PC-9 (cell line): ENCODE measurements at regions of chr1 and their contacts with region 1.

Region 1: DNA sequence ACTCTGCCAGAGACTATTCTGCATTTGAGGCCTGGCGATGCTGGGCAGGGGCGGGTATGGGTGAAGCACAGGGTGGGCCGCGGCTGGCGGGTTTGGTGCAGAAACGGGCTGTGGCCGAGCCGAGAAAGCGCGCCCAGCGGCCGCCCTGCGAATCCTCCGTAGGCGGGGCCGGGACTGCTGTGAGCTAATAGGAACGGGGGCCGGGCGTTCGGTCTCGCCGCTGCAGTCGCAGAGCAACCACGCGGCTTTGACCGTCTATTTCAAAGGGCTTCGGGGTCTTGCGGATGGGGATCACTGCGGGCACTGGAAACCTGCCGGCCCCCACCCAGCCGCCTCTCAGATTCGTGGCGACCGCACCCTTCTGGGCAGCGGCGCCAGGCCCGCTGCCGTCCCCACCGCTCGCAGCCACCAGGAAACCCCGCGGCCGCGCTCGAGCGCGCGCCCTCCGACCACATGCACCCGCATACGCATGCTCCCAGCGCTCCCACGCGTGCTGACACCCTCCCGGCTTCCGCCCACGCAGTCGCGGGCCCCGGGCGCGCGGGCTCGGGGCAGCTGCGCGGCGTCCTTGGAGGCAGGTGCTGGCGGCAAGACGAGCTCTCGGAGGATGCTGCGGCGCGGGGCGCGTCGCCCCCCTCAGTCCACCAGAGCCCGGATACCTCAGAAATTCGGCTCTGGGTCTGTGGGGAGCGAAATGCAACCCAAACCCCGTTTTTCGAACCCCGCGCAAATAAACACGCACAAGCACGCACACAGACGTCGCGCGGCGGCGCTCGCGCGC is 32.6 kb downstream of the DNTTIP2 start:
- DNase-seq: peak; percentile 77 to 81
- H3K4me3 ChIP-seq: peak overlapping the region; percentile 94
- H3K27ac ChIP-seq: peak overlapping the region; percentile 81
- H3K4me1 ChIP-seq: peaks cover 36% of the 10 kb centered on the region
- H3K27me3 ChIP-seq: no peaks in the 10 kb centered on the region
- CTCF ChIP-seq: peak; percentile 37; the same call in 1 of the 2 replicates

Region 2: GRCh38 chr1:93437976-93438605 is 408.3 kb before region 1 on chr1:
- CTCF ChIA-PET with region 1: no interaction called
- POLR2A ChIA-PET with region 1: no interaction called
- intact Hi-C with region 1: loop called (anchors 2 kb)
- DNase-seq: peak in 1 of 2 experiments; percentile 70
- H3K4me3 ChIP-seq: no peak overlapping the region
- H3K27ac ChIP-seq: no peak overlapping the region
- H3K4me1 ChIP-seq: peaks cover 14% of the 10 kb centered on the region
- H3K27me3 ChIP-seq: no peaks in the 10 kb centered on the region
- CTCF ChIP-seq: peak; percentile 96

Region 3: DNA sequence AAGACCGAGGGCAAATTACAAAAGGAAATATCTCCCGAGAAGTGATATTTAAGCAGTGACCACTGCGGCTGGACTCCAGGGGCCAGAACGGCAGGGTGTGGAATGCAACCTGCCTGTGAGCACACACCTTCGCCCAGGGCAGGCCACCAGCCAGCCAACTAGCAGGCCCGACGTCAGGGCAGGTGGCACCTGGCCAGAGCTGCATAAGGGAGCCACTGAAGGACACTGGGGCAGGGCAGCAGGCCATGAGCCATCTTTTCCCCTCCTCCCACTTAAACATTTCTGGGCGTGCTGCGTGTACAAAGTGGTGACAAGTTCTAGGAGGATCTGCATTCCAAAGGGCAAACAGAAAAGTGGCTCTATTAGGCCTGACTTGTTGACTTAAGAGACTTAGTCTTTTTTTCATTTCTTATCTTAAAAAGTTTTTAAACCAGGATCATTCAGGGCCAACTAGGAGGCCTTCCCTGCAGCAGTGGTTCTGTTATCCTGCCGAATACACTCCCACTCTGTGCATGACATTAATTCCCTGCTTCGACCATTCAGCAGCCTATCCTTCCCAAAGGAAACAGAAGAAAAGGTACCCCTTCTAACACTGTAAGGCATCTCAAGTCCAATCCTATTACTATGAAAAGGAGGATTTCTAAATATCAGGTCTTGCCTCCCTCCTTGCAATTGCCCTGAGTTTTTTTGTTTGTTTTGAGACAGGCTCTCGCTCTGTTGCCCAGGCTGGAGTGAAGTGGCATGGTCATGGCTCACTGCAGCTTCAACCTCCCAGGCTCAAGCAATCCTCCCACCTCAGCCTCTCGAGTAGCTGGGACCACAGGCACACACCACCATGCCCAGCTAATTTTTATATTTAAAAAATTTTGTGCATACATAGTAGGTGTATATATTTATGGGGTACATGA is 261.1 kb before region 1 on chr1:
- CTCF ChIA-PET with region 1: interaction called, 8 read pairs
- POLR2A ChIA-PET with region 1: interaction called, 5 read pairs
- intact Hi-C with region 1: loop called (anchors 1 kb)
- DNase-seq: peak; percentile 99 to 100
- H3K4me3 ChIP-seq: peak overlapping the region; percentile 33; the same call in 1 of the 2 replicates
- H3K27ac ChIP-seq: peak overlapping the region; percentile 83
- H3K4me1 ChIP-seq: peaks cover 98% of the 10 kb centered on the region
- H3K27me3 ChIP-seq: no peaks in the 10 kb centered on the region
- CTCF ChIP-seq: no peak

Region 4: GRCh38 chr1:93692983-93693591 is 153.3 kb before region 1 on chr1:
- CTCF ChIA-PET with region 1: interaction called, 11 read pairs
- POLR2A ChIA-PET with region 1: no interaction called
- intact Hi-C with region 1: no loop called
- DNase-seq: peak; percentile 74 to 98
- H3K4me3 ChIP-seq: peak overlapping the region; percentile 43
- H3K27ac ChIP-seq: peak overlapping the region; percentile 99
- H3K4me1 ChIP-seq: peaks cover 75% of the 10 kb centered on the region
- H3K27me3 ChIP-seq: no peaks in the 10 kb centered on the region
- CTCF ChIP-seq: no peak

Region 5: GRCh38 chr1:93874025-93874651 is 27.7 kb after region 1 on chr1:
- CTCF ChIA-PET with region 1: no interaction called
- POLR2A ChIA-PET with region 1: no interaction called
- intact Hi-C with region 1: no loop called
- DNase-seq: peak in 1 of 2 experiments; percentile 52
- H3K4me3 ChIP-seq: no peak overlapping the region
- H3K27ac ChIP-seq: no peak overlapping the region
- H3K4me1 ChIP-seq: peaks cover 22% of the 10 kb centered on the region
- H3K27me3 ChIP-seq: no peaks in the 10 kb centered on the region
- CTCF ChIP-seq: peak; percentile 84